ENCODE measurements at regions of chr17 and their contacts with region 1.

Region 1: DNA sequence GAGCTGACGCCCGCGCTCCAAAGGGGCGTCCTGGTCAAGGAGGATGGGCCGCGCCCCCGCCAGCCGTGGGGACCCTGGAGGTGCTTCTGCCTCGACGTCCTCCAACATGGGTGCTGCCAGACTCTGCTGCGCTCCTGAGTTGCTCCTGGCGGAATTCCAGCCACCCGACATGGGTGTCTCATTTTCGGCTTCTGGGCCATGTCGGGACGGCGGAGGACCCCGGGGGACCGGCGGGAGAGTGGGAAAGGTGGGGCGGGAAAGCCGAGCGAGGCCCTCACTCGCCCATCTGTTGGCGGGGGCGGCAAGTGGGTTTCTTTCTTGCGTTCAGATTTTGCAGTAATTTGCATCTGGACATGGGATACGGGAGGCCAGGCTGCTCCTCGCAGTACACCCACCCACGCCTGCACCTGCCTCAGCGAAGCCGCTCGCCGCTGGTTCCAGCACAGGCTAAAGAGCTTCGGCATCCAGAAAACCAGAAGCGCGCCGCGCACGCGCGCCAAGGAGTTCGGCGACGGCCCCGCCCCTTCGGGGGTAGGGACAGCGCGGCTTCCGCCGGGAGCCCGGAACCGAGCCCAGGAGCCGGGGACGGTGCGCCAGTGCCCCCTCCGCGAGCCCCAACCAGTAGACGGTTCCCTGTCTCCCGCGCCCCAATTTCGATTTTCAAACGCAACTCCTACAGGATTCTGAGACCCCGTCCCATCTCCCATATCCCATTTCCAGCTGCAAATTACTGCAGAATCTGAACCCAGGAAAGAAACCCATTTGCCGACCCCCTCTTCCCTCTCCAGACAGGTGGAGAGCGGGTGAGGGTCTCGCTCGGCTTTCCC is at the start of gene ARMC7:
- DNase-seq: peak; percentile 84 to 97
- H3K4me3 ChIP-seq: peak within 1 kb of the TSS; percentile 37
- CTCF ChIP-seq: no peak
- POLR2A ChIP-seq: no peak
- total RNA-seq, gene ARMC7: 10.6 to 14.7 (median 11.9) TPM

Region 2: GRCh38 chr17:75173526-75173925 is 63.9 kb after region 1 on chr17:
- intact Hi-C with region 1: loop called (anchors 5 kb)
- DNase-seq: no peak
- H3K4me3 ChIP-seq: no peak overlapping the region
- CTCF ChIP-seq: no peak
- POLR2A ChIP-seq: no peak

Region 3: GRCh38 chr17:75205037-75205792 is 95.6 kb after region 1 on chr17 and contains the start of gene NUP85:
- intact Hi-C with region 1: loop called (anchors 10 kb)
- DNase-seq: peak; percentile 91 to 98
- H3K4me3 ChIP-seq: peak within 1 kb of the TSS; percentile 55
- CTCF ChIP-seq: peak in 1 of 3 donors; percentile 71
- POLR2A ChIP-seq: peak in 1 of 2 donors; percentile 20
- total RNA-seq, gene NUP85: 32.1 to 46.2 (median 35.1) TPM

Region 4: GRCh38 chr17:75250009-75250471 is 140.4 kb after region 1 on chr17:
- intact Hi-C with region 1: no loop called
- DNase-seq: peak in 1 of 2 donors; percentile 83
- H3K4me3 ChIP-seq: no peak overlapping the region
- CTCF ChIP-seq: no peak
- POLR2A ChIP-seq: no peak